ENCODE measurements at regions of chr4 and their contacts with region 1.

Region 1: DNA sequence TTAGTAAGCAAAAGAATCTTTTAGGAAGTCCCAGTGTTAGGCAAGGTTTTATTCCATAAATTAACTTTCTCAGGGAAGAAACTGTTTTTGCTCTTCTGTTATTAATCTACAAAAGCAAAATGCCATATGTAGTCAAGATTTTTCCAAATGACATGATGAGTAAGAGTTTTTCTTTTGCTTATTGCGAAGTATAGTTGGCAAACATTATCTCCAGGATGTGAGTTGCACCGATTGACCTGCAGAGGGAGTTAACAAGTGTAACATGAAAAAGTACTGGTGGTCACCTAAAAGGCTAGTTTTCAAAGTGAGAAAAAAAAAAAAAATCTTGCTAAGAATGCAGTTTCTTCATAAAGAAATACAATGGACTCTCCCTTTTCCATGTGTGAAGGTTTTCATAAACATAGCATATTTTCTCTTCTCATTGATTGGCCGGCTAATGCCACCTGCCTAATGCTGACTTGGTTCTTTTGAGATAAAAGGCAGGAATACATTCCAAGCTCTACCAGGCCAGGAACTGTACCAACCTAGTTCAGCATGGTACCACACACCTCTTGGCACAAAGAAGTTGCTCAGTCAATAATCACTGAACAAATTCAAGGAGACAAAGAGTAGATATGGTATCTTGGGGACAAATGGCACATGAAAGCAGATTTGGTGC is 100.2 kb downstream of the LNX1 start:
- DNase-seq: peak; percentile 57 to 58
- H3K4me3 ChIP-seq: no peak overlapping the region
- H3K27ac ChIP-seq: peak overlapping the region in 1 of 3 donors; percentile 56
- H3K4me1 ChIP-seq: peaks cover 0 to 3% of the 10 kb centered on the region in 2 donors
- H3K27me3 ChIP-seq: no peaks in the 10 kb centered on the region
- CTCF ChIP-seq: peak; percentile 16 to 89 (median 66)
- POLR2A ChIP-seq: no peak

Region 2: DNA sequence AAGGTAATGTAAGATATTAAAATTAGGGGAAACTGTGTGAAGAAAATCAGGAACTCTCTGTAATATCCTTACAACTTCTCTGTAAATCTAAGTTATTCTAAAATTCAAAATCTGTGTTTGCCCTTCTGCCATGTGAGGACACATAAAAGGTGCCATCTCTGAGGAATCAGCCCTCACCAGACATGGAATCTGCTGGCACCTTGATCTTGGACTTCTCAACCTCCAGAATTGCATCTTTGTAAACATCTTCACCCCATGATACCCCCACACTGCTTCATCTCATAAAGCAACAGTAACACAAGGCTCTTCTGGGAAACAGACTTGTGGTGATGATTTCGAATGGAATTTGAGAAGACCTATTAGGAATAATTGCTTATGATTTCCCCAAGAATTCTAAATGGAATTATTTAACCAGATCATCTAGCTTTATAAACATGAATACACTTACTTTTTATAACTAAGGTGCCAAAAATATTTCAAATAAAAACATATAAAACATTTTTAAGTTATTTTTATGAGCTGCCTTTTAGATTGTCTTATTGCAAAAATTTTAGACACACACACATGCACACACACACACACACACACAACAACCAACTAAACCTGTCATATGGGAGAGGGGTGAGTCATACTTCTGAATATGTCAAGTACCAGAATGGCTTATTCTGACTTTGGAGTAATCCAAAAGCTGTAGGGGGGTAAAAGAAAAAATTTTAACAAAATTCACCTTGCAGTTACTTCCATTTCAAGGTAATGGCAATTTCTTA is 914.1 kb before region 1 on chr4:
- intact Hi-C with region 1: no loop called
- DNase-seq: peak; percentile 45 to 55
- H3K4me3 ChIP-seq: no peak overlapping the region
- H3K27ac ChIP-seq: no peak overlapping the region
- H3K4me1 ChIP-seq: peaks cover 0 to 7% of the 10 kb centered on the region in 2 donors
- H3K27me3 ChIP-seq: no peaks in the 10 kb centered on the region
- CTCF ChIP-seq: no peak
- POLR2A ChIP-seq: no peak

Region 3: GRCh38 chr4:53576676-53577372 is 85.7 kb after region 1 on chr4:
- intact Hi-C with region 1: loop called (anchors 10 kb)
- DNase-seq: no peak
- H3K4me3 ChIP-seq: no peak overlapping the region
- H3K27ac ChIP-seq: peak overlapping the region; percentile 25 to 42 (median 36)
- H3K4me1 ChIP-seq: peaks cover 28 to 54% of the 10 kb centered on the region in 2 donors
- H3K27me3 ChIP-seq: no peaks in the 10 kb centered on the region
- CTCF ChIP-seq: no peak
- POLR2A ChIP-seq: no peak